ENCODE measurements at regions of chrX and their contacts with region 1.

Region 1: GRCh38 chrX:119398974-119399771 is at the start of gene SLC25A43:
- DNase-seq: peak in 1 of 2 experiments; percentile 50
- H3K4me3 ChIP-seq: peak within 1 kb of the TSS; percentile 94
- H3K27ac ChIP-seq: 0 out of 2 replicates have a peak within 1 kb of the TSS, but pooled peaks have one; percentile 38
- H3K4me1 ChIP-seq: peaks cover 39% of the 10 kb centered on the region
- H3K27me3 ChIP-seq: no peaks in the 10 kb centered on the region
- CTCF ChIP-seq: no peak
- total RNA-seq, gene SLC25A43: 38.4 and 42.3 TPM in 2 replicates

Region 2: GRCh38 chrX:119211649-119212014 is 187.5 kb before region 1 on chrX:
- CTCF ChIA-PET with region 1: no interaction called
- POLR2A ChIA-PET with region 1: no interaction called
- intact Hi-C with region 1: no loop called
- DNase-seq: no peak
- H3K4me3 ChIP-seq: no peak overlapping the region
- H3K27ac ChIP-seq: no peak overlapping the region
- H3K4me1 ChIP-seq: no peaks in the 10 kb centered on the region
- H3K27me3 ChIP-seq: peaks cover 24% of the 10 kb centered on the region
- CTCF ChIP-seq: no peak

Region 3: GRCh38 chrX:119325456-119325855 is 73.7 kb before region 1 on chrX:
- CTCF ChIA-PET with region 1: no interaction called
- POLR2A ChIA-PET with region 1: no interaction called
- intact Hi-C with region 1: loop called (anchors 1 kb)
- DNase-seq: peak; percentile 35 to 58
- H3K4me3 ChIP-seq: no peak overlapping the region
- H3K27ac ChIP-seq: peak overlapping the region; percentile 51
- H3K4me1 ChIP-seq: peaks cover 18% of the 10 kb centered on the region
- H3K27me3 ChIP-seq: no peaks in the 10 kb centered on the region
- CTCF ChIP-seq: no peak